ENCODE measurements at regions of chr15 and their contacts with region 1.

Region 1: DNA sequence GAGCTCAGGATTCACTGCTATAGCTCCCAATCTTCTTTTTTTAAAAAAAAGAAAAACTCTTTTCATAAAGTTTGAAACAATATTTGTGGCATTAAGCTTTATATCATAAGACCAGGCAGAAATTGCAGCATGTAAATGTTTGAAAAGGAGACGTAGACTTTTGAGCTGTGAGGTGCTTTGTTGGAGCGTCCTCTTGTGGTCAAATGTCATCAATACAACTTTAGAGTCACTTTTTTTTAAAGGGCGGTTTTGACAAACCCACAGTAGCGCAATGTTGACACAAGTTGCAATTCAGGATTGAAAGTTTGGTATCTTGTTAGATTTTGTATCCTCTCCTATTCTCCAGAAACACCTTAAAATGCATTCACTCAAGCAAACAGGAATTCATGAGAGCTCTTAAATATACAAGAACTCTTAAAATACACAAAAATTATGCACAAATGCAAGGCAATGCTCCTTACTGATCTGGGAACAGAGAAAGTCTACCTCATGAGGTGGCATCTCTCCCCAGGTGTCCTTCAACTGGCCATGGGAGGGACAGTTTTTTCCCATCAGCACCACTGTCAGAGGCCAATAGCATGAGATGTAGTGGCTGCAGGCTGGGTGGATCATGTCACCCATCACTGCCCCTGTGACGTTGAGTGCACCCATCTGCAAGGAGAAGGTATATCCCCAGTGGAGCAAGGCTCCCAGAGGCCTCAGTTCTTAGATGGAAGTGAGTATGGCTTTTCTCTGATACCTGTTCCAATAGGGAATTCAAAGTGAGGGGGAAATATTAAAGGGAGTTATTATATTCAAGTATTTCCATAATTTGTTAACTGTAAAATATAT is 70.7 kb downstream of the ANXA2 start:
- DNase-seq: no peak
- H3K4me3 ChIP-seq: no peak overlapping the region
- H3K27ac ChIP-seq: no peak overlapping the region
- H3K4me1 ChIP-seq: peaks cover 0 to 5% (median 1%) of the 10 kb centered on the region in 4 experiments; a peak in 2 of 7 replicates
- H3K27me3 ChIP-seq: no peaks in the 10 kb centered on the region
- CTCF ChIP-seq: peak in 2 of 3 experiments; percentile 78 to 85; a peak in 3 of 4 replicates
- EP300 ChIP-seq: no peak
- POLR2A ChIP-seq: no peak
- RAD21 ChIP-seq: peak; percentile 97 to 99

Region 2: DNA sequence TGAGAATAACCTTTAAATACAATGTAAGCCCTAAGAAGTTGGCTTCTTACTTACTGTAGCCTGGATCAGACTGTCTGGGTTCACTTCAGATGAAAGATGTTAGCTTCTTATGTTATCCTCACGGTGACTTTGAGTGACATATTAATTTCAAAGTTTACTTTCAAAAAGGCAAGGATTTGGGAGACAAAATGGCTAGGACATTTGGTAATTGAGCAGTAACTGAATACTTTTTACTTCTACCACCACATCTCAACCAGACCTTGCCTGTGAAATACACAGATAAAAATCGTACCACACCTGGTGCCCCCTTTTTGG is 601.9 kb before region 1 on chr15:
- CTCF ChIA-PET with region 1: interaction called, 54 read pairs
- POLR2A ChIA-PET with region 1: no interaction called
- DNase-seq: no peak
- H3K4me3 ChIP-seq: no peak overlapping the region
- H3K27ac ChIP-seq: no peak overlapping the region
- H3K4me1 ChIP-seq: no peaks in the 10 kb centered on the region
- H3K27me3 ChIP-seq: no peaks in the 10 kb centered on the region; a peak in 1 of 7 replicates
- CTCF ChIP-seq: no peak
- EP300 ChIP-seq: no peak
- POLR2A ChIP-seq: no peak
- RAD21 ChIP-seq: no peak

Region 3: GRCh38 chr15:59741274-59741906 is 585.6 kb before region 1 on chr15:
- CTCF ChIA-PET with region 1: interaction called, 120 read pairs
- POLR2A ChIA-PET with region 1: no interaction called
- DNase-seq: no peak
- H3K4me3 ChIP-seq: no peak overlapping the region
- H3K27ac ChIP-seq: no peak overlapping the region
- H3K4me1 ChIP-seq: no peaks in the 10 kb centered on the region
- H3K27me3 ChIP-seq: no peaks in the 10 kb centered on the region
- CTCF ChIP-seq: peak in 2 of 3 experiments; percentile 62 to 73; a peak in 3 of 4 replicates
- EP300 ChIP-seq: no peak
- POLR2A ChIP-seq: no peak
- RAD21 ChIP-seq: peak; percentile 77 to 83

Region 4: DNA sequence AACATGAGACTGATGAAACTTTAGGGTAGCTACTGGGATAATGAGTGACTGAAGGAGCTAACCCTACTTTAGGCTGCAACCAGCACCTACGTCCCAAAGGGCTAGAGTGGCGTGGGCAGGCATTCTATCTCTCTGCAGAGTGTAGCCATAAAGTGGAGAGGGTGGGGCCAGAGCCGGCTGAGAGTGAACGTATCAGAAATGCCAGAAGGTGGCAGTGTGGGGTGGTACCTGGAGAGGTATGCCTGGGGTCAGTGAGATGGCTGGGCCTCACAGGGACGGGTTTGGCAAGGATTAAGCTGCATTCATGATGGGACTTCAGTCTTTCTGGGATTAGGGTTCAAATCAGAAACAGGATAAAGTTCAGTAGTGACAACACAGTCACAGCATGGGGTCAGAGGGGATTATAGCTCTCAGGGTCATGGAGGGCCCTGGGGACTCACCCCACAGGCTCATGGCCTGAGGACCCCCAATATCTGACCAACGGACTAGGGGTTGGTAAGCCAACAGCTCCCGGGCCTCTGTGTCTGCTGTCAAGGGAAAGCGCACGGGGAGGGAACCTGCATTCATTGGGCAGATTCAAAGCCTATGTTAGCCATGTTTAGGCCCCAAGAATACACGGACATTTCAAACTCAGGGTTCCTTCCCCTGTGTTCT is 409.4 kb before region 1 on chr15:
- CTCF ChIA-PET with region 1: interaction called, 49 read pairs
- POLR2A ChIA-PET with region 1: no interaction called
- DNase-seq: peak; percentile 56 to 88
- H3K4me3 ChIP-seq: no peak overlapping the region
- H3K27ac ChIP-seq: no peak overlapping the region
- H3K4me1 ChIP-seq: peaks cover 0 to 8% (median 5%) of the 10 kb centered on the region in 4 experiments; a peak in 4 of 7 replicates
- H3K27me3 ChIP-seq: no peaks in the 10 kb centered on the region
- CTCF ChIP-seq: peak; percentile 71 to 93 (median 83)
- EP300 ChIP-seq: no peak
- POLR2A ChIP-seq: no peak
- RAD21 ChIP-seq: peak; percentile 89 to 95

Region 5: GRCh38 chr15:60212536-60212935 is 114.5 kb before region 1 on chr15:
- CTCF ChIA-PET with region 1: interaction called, 58 read pairs
- POLR2A ChIA-PET with region 1: no interaction called
- DNase-seq: peak in 1 of 2 experiments; percentile 13
- H3K4me3 ChIP-seq: no peak overlapping the region
- H3K27ac ChIP-seq: no peak overlapping the region
- H3K4me1 ChIP-seq: no peaks in the 10 kb centered on the region
- H3K27me3 ChIP-seq: no peaks in the 10 kb centered on the region
- CTCF ChIP-seq: peak; percentile 11 to 43 (median 22); a peak in 3 of 4 replicates
- EP300 ChIP-seq: no peak
- POLR2A ChIP-seq: no peak
- RAD21 ChIP-seq: peak; percentile 44 to 54

Region 6: GRCh38 chr15:60315878-60316277 is 11.2 kb before region 1 on chr15:
- CTCF ChIA-PET with region 1: interaction called, 11 read pairs
- POLR2A ChIA-PET with region 1: interaction called, 3 read pairs
- DNase-seq: no peak
- H3K4me3 ChIP-seq: no peak overlapping the region
- H3K27ac ChIP-seq: no peak overlapping the region
- H3K4me1 ChIP-seq: no peaks in the 10 kb centered on the region
- H3K27me3 ChIP-seq: no peaks in the 10 kb centered on the region
- CTCF ChIP-seq: no peak
- EP300 ChIP-seq: no peak
- POLR2A ChIP-seq: no peak
- RAD21 ChIP-seq: no peak

Region 7: GRCh38 chr15:60520825-60521368 is 193.9 kb after region 1 on chr15:
- CTCF ChIA-PET with region 1: interaction called, 14 read pairs
- POLR2A ChIA-PET with region 1: no interaction called
- DNase-seq: peak in 1 of 2 experiments; percentile 87
- H3K4me3 ChIP-seq: no peak overlapping the region
- H3K27ac ChIP-seq: no peak overlapping the region
- H3K4me1 ChIP-seq: peaks cover 0 to 3% (median 0%) of the 10 kb centered on the region in 4 experiments; a peak in 4 of 7 replicates
- H3K27me3 ChIP-seq: no peaks in the 10 kb centered on the region
- CTCF ChIP-seq: peak in 2 of 3 experiments; percentile 74 to 86; a peak in 3 of 4 replicates
- EP300 ChIP-seq: no peak
- POLR2A ChIP-seq: no peak
- RAD21 ChIP-seq: peak; percentile 82 to 83

Measured in H1 (cell line).